Ascending aorta (tissue), 2 donors: ENCODE measurements at regions of chr1 and their contacts with region 1.

Region 1: GRCh38 chr1:231528172-231529029 is at the start of gene TSNAX:
- DNase-seq: peak; percentile 54 to 94
- H3K4me3 ChIP-seq: peak within 1 kb of the TSS; percentile 81 to 95
- H3K27ac ChIP-seq: peak within 1 kb of the TSS; percentile 85 to 98
- H3K4me1 ChIP-seq: peaks cover 0 to 22% of the 10 kb centered on the region in 2 donors
- H3K27me3 ChIP-seq: no peaks in the 10 kb centered on the region
- CTCF ChIP-seq: no peak
- total RNA-seq, gene TSNAX: 15.0 TPM

Region 2: DNA sequence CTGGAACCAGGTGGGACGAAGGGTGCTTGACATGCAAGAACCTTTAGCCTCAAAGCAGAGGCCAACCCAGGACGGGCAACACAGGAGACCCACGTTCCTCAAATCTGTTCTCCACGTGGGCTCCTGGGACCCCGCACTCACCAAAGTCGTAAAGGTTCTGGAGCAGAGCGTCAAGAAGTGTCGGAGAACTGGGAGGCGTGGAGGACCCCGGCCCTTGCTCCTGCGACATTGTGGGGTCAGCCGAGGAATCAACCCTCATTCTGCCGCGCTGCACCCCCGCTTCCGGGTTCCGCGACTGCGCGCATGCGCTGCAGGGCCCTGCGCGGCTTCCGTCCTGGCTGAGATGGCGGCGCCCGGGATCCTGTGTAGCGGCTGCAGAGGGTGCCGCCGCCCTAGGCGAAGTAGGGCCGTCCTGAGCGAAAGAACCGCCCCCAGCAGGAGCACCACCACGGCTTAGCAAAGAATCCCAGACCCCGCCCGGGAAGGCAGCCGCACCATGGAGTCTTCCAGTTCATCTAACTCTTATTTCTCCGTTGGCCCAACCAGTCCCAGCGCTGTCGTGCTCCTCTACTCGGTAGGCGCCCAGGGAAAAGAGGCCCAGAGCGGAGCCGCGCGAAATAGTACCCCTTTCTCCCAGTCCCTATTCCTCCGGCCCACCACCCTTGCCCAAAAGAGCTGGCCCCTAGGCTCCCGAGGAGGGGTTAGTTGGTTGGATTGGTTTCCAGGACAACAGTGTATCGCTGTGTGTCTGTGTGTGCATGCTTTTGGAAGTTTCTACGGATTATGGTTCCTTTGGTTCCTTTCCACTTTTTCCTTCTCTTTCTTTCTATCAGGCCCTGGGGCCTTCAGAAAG is 287.3 kb before region 1 on chr1 and contains the start of gene GNPAT:
- intact Hi-C with region 1: loop called (anchors 2 kb)
- DNase-seq: peak; percentile 23 to 92
- H3K4me3 ChIP-seq: peak within 1 kb of the TSS; percentile 85 to 90
- H3K27ac ChIP-seq: peak within 1 kb of the TSS; percentile 82 to 84
- H3K4me1 ChIP-seq: peaks cover 0 to 18% of the 10 kb centered on the region in 2 donors
- H3K27me3 ChIP-seq: no peaks in the 10 kb centered on the region
- CTCF ChIP-seq: no peak
- total RNA-seq, gene GNPAT: 34.8 TPM

Region 3: DNA sequence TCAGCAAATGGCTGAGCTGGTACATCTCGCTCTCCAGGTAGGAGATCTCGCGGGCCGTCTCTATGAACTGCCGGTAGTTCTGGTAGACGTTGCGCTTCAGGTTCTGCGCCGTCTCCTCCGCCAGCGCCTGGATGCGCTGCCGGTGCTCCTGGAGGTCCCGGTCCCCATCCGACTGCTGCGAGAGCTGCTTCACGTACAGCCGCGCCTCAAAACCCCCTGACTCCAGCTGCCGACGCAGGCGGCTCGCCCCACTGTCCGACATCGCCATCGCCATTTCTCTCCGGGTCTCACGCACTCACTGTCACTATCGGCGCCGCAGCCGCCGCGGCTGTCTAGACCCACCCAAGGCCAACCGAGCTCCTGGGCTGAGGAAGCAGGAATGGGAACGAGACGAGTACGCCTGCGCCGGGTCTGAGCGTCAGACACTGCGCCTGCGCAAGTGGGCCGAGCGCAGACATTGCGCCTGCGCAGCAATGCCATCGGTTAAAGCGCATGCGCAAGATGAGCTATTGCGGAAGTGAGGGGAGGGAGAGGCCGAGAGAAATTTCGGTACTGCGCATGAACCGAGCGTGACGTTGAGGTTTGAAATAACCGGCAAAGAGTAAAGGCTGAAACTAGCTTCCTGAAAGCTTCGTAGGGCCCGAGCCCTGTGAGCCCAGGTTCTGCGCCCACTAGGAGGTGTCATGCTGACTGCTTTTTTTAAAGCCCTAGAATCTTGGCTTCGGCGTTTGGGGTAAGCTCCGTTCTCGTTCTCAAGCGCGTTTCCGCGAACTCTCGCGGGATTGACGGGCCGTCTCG is 190.7 kb before region 1 on chr1 and contains the start of gene EXOC8:
- intact Hi-C with region 1: loop called (anchors 1 kb)
- DNase-seq: peak; percentile 82 to 98
- H3K4me3 ChIP-seq: peak within 1 kb of the TSS; percentile 81 to 90
- H3K27ac ChIP-seq: peak within 1 kb of the TSS; percentile 92 to 97
- H3K4me1 ChIP-seq: peaks cover 8 to 40% of the 10 kb centered on the region in 2 donors
- H3K27me3 ChIP-seq: no peaks in the 10 kb centered on the region
- CTCF ChIP-seq: no peak
- total RNA-seq, gene EXOC8: 9.9 TPM

Region 4: DNA sequence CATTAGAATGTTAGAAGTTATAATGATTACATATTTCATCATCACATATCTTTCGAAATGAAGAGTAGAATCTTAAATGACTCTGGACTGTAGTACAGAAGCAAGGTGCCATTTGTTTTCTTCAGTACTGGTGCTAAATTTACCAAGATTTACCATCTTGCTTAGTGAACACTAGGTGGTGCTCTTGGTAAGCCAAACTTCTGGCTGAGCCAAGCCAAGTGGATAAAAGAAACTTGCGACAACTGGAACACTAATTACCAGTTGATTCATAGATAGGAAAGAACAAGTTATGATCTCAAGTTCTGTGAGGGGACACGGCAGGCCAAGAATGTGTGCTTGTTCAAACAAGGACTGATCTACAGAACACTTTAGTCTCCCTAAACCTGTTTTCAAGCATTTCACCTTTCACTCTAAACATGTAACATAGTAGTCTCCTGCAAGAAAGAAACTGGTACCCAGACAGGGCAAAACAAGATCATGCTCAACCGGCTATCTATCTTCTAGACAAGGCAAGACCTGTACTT is 170.5 kb before region 1 on chr1:
- intact Hi-C with region 1: loop called (anchors 1 kb)
- DNase-seq: peak in 1 of 2 donors; percentile 70
- H3K4me3 ChIP-seq: no peak overlapping the region
- H3K27ac ChIP-seq: peak overlapping the region in 1 of 2 donors; percentile 31
- H3K4me1 ChIP-seq: peaks cover 0 to 2% of the 10 kb centered on the region in 2 donors
- H3K27me3 ChIP-seq: no peaks in the 10 kb centered on the region
- CTCF ChIP-seq: peak; percentile 63 to 76 (median 71)

Region 5: GRCh38 chr1:231395076-231395995 is 133.1 kb before region 1 on chr1:
- intact Hi-C with region 1: loop called (anchors 1 kb)
- DNase-seq: peak in 1 of 2 donors; percentile 74
- H3K4me3 ChIP-seq: peak overlapping the region; percentile 7 to 27
- H3K27ac ChIP-seq: peak overlapping the region; percentile 79 to 85
- H3K4me1 ChIP-seq: peaks cover 0 to 15% of the 10 kb centered on the region in 2 donors
- H3K27me3 ChIP-seq: no peaks in the 10 kb centered on the region
- CTCF ChIP-seq: no peak

Region 6: DNA sequence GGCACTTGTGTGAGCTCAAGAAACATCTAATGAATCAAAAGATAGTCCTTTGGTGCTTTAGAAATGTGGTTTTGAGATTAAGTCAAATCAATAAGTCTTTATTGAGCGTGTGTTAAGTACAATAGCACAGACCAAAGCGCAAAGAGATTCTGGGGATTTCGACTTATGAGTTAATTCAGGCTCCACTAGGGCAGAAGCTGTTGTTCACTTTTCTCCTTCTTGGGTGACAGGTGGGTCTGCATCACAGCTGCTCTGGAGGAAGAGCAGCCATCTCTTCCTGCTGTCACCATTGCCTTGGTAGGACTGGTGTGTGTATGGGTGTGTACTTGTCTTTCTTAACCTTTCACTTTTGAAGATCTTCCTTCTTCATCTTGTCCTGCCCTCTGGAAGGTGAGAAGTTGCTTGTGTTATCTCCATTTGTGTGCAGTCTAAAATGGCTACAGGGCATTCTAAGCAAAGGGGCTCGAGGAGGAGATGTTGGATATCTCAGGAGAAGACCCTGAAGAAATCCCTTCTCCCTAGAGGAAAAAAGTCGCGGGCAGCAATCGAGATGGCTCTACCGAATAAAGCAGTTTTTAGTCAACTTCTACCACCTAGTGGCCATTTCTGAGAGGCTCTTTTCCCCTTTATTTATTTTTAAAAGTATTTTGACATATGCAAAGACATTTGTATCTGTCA is 75.3 kb after region 1 on chr1:
- intact Hi-C with region 1: loop called (anchors 5 kb)
- DNase-seq: no peak
- H3K4me3 ChIP-seq: peak overlapping the region; percentile 59 to 63
- H3K27ac ChIP-seq: no peak overlapping the region
- H3K4me1 ChIP-seq: peaks cover 0 to 3% of the 10 kb centered on the region in 2 donors
- H3K27me3 ChIP-seq: no peaks in the 10 kb centered on the region
- CTCF ChIP-seq: peak; percentile 54 to 76 (median 56)